K562 (cell line): ENCODE measurements at regions of chr16 and their contacts with region 1.

Region 1: DNA sequence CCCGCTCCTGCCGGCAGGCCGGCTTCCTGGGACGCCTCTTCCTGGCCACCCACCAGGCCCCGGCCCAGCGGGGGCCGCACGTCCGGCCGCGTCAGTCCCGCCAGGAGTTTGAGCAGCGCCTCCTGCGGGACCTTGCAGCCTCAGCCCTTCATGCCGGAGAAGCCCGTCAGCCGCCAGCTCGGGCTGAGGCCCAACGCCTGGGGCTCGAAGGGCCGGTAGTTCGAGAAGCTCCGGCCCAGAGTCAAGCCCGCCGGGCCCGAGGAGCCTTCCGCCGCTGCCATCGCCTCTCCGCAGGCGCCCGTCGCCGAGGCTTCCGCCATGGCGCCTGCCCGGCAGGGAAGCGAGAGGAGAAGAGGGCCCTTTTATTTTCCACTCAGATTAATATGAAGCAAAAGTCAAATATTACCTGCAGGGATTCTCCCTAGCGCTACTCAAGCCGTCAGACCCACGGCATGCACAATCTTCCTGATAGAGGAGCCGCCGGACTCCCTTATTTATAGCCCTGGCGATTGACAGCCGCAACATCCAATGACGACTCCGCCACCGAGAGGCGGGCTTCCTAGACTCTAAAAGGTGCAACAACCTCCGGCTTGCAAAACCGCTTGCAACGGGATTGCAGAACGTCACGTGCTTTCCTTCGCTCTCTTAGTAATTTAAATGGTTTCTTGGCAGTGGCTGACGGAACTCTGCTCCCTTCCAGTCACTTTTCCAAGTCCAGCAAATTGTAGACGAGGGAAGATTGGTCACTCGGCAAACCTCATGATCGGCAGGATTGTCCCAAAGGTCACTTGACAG is at the start of gene SEPHS2:
- DNase-seq: peak; percentile 93 to 99 (median 96)
- ATAC-seq: peak; percentile 90
- H3K4me3 ChIP-seq: peak within 1 kb of the TSS; percentile 82
- H3K27ac ChIP-seq: peak within 1 kb of the TSS; percentile 96
- H3K4me1 ChIP-seq: peaks cover 6 to 13% of the 10 kb centered on the region in 2 experiments; a peak in 3 of 5 replicates
- H3K27me3 ChIP-seq: no peaks in the 10 kb centered on the region
- CTCF ChIP-seq: peak in 2 of 3 experiments; percentile 61 to 70; a peak in 5 of 6 replicates
- EP300 ChIP-seq: peak; percentile 61
- POLR2A ChIP-seq: peak; percentile 98
- RAD21 ChIP-seq: peak; percentile 8 to 34; a peak in 2 of 4 replicates
- polyA plus RNA-seq, gene SEPHS2: 20.9 to 21.3 TPM

Region 2: GRCh38 chr16:29256501-29256981 is 1189.1 kb before region 1 on chr16:
- CTCF ChIA-PET with region 1: no interaction called
- POLR2A ChIA-PET with region 1: no interaction called
- in situ Hi-C with region 1: no loop called
- intact Hi-C with region 1: no loop called
- DNase-seq: no peak
- ATAC-seq: no peak
- H3K4me3 ChIP-seq: no peak overlapping the region
- H3K27ac ChIP-seq: no peak overlapping the region
- H3K4me1 ChIP-seq: peaks cover 6 to 45% of the 10 kb centered on the region in 2 experiments; a peak in 4 of 5 replicates
- H3K27me3 ChIP-seq: peaks cover 2 to 17% of the 10 kb centered on the region in 2 experiments; a peak in 4 of 5 replicates
- CTCF ChIP-seq: no peak
- EP300 ChIP-seq: no peak
- POLR2A ChIP-seq: no peak
- RAD21 ChIP-seq: no peak

Region 3: DNA sequence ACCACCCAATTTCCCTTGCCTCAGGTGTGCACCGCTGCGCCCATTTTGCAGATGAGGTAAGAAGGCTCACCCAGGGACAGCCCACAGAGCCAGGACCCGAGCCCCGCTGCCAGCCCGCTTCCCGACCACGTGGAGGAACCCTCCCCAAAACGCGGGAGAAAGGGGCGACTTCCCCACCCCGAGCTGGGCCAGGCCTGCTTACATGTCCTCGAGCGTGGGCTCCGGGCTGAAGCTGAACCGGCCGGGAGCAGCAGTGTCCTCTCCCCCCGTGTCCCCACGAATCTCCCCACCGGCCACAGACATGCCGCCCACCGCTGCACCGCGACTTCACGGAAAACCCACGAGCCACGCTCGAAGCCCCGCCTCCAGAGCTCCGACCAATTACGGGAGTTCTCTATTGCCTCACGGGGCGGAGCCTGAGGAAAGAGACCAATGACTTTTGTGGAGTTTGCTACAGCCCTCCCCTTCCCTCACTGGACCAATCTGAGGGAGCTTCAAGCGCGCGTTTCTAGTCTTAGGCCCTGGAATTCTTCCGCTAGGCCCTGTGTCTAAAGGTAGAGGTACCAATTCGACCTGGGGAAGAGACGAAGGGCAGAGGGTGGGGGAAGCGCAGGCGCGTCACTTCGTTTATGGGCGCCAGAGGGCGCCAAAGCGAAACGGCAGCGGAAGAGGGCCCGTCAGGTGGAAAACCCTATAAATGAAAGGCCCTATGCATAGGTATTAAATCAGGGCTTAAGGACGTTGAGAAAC is 15.8 kb before region 1 on chr16 and contains the start of gene DCTPP1:
- CTCF ChIA-PET with region 1: no interaction called
- POLR2A ChIA-PET with region 1: interaction called, 16 read pairs
- in situ Hi-C with region 1: no loop called
- intact Hi-C with region 1: loop called (anchors 1 kb)
- DNase-seq: peak; percentile 94 to 99 (median 95)
- ATAC-seq: peak; percentile 99
- H3K4me3 ChIP-seq: peak within 1 kb of the TSS; percentile 75
- H3K27ac ChIP-seq: peak within 1 kb of the TSS; percentile 84
- H3K4me1 ChIP-seq: peaks cover 15 to 36% of the 10 kb centered on the region in 2 experiments
- H3K27me3 ChIP-seq: no peaks in the 10 kb centered on the region
- CTCF ChIP-seq: peak; percentile 82 to 96 (median 88)
- EP300 ChIP-seq: peak; percentile 52
- POLR2A ChIP-seq: peak; percentile 82
- RAD21 ChIP-seq: peak; percentile 85 to 87
- polyA plus RNA-seq, gene DCTPP1: 45.0 to 80.6 TPM

Region 4: GRCh38 chr16:30526823-30527635 is 81.4 kb after region 1 on chr16:
- CTCF ChIA-PET with region 1: interaction called, 3 read pairs
- POLR2A ChIA-PET with region 1: interaction called, 7 read pairs
- in situ Hi-C with region 1: no loop called
- intact Hi-C with region 1: loop called (anchors 2 kb)
- DNase-seq: peak; percentile 95 to 99 (median 96)
- ATAC-seq: peak; percentile 95
- H3K4me3 ChIP-seq: peak overlapping the region; percentile 78
- H3K27ac ChIP-seq: peak overlapping the region; percentile 97
- H3K4me1 ChIP-seq: peaks cover 36 to 67% of the 10 kb centered on the region in 2 experiments; a peak in 4 of 5 replicates
- H3K27me3 ChIP-seq: no peaks in the 10 kb centered on the region
- CTCF ChIP-seq: peak; percentile 20 to 37 (median 31); a peak in 4 of 6 replicates
- EP300 ChIP-seq: no peak
- POLR2A ChIP-seq: peak; percentile 91
- RAD21 ChIP-seq: peak in 1 of 2 experiments; percentile 32; a peak in 1 of 4 replicates

Region 5: GRCh38 chr16:30534368-30535105 is 88.9 kb after region 1 on chr16 and contains the start of gene ZNF747:
- CTCF ChIA-PET with region 1: no interaction called
- POLR2A ChIA-PET with region 1: interaction called, 8 read pairs
- in situ Hi-C with region 1: no loop called
- intact Hi-C with region 1: loop called (anchors 2 kb)
- DNase-seq: peak; percentile 83 to 94 (median 88)
- ATAC-seq: peak; percentile 88
- H3K4me3 ChIP-seq: peak within 1 kb of the TSS; percentile 49
- H3K27ac ChIP-seq: peak within 1 kb of the TSS; percentile 96
- H3K4me1 ChIP-seq: peaks cover 9 to 50% of the 10 kb centered on the region in 2 experiments; a peak in 4 of 5 replicates
- H3K27me3 ChIP-seq: no peaks in the 10 kb centered on the region
- CTCF ChIP-seq: peak in 1 of 3 experiments; percentile 6; a peak in 2 of 6 replicates
- EP300 ChIP-seq: no peak
- POLR2A ChIP-seq: no peak
- RAD21 ChIP-seq: 0 out of 4 replicates have a peak, but pooled peaks of 1 of the 2 experiments have one; percentile 5
- polyA plus RNA-seq, gene ZNF747: 0.14 to 0.27 TPM

Region 6: DNA sequence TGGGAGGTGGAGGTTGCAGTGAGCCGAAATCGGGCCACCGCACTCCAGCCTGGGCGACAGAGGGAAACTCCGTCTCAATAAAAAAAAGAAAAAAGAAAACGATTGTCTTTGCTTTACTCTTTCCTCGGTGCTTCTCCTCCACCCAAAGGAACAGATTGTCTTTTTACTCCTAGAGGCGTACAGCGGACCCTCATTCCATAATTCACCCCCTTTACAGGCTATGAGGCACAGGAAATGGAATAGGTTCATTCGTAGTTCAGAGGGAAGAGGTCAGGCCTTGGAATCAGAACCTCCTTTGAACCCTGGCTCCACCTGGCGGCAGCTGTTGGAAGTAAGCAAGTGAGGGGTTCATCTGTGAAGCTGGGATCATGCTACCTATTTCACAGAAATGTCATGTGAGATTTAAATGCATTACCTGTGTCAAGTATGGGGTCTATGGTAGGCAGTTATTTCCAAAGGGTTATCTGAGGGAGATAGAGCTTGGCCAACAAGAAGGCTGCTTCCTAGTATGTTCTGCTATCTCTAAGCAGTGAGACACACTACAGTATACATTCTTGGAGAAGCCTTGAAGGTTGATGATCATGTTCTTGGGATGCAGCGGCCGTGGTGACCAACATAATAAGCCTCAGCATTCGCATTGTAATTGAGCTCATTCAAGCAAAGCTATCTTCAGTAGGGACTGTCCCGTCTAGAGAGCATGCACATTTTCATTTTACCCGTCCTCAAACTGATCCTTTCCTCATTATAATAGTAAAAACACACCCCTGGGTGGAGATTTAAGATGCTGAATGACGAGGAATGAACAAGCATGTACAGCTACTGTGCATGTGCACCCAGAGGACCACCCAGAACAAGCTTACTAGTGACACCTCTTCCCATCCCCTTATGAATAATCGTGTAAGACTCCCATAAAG is 183.3 kb after region 1 on chr16:
- CTCF ChIA-PET with region 1: interaction called, 12 read pairs
- POLR2A ChIA-PET with region 1: interaction called, 3 read pairs
- in situ Hi-C with region 1: no loop called
- intact Hi-C with region 1: no loop called
- DNase-seq: peak; percentile 68 to 92 (median 75)
- ATAC-seq: peak; percentile 98
- H3K4me3 ChIP-seq: no peak overlapping the region
- H3K27ac ChIP-seq: peak overlapping the region; percentile 41
- H3K4me1 ChIP-seq: peaks cover 4 to 15% of the 10 kb centered on the region in 2 experiments; a peak in 2 of 5 replicates
- H3K27me3 ChIP-seq: no peaks in the 10 kb centered on the region
- CTCF ChIP-seq: peak; percentile 86 to 95 (median 91)
- EP300 ChIP-seq: peak; percentile 34; the same call in 1 of the 2 replicates
- POLR2A ChIP-seq: no peak
- RAD21 ChIP-seq: peak; percentile 90 to 95